ENCODE measurements at regions of chr16 and their contacts with region 1.

Region 1: DNA sequence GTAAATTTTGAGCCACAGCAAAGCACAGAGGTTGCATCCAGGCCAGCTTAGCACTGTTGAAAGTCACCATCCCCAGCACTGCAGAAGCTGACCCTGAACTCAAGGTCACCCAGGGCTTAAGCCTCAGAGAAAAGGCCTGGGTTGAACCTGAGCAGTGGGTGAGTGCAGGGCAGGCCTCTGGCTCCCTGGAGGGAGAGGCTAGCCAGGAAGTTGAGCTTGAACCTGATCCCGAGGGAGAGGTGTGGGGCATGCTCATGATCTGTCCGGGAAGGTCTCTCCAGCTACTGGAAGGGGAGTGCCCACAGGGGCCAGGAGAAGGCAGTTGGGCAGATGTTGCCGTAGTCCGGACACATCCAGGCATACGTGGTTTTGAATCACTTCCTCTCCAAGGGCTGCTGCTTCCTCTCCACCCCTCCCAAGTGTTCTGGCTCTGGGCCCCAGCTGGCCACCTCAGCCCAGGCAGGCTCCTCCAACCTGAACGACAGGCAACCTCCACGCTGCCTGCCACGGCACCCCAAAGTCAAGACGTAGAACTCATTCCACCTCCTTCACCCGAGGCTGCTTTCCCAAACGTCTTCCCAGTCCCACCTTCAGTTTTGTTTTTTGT is 18.4 kb downstream of the CARHSP1 start:
- DNase-seq: no peak

Region 2: GRCh38 chr16:8712589-8713361 is 137.6 kb before region 1 on chr16:
- in situ Hi-C with region 1: no loop called
- DNase-seq: no peak

Region 3: DNA sequence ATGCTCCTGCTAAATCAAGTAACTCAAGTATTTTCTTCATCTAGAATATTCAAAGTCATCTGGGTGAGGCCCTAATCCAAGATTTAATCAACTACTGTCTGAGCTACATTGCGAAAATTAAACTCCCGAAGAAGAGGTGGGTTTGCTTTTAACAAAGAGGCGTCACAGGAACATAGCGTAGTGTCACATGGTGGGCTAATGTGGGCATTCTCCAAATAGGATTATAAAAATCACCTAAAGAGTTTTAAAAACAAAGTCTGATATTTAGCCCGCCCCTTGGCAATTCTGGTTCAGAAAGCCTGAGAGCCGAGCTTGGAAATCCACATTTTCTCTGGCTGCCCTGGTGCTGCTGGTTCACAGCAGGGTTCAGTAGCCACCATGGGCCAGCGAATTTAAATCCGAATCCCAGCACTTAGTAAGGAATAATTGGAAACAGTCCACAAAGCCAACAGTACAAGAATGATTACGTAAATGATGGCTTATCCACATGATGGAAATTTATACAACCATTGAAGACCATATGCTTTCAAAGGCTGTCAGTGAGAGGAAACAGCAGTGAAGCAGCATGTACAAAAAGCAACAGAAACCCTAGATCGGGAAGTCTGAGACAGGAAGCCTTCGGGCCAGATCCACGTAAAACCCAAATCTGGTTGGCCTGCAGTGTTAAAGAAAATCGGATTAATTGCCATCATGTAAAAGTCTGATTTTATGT is 44.0 kb before region 1 on chr16:
- in situ Hi-C with region 1: loop called (anchors 10 kb)
- DNase-seq: no peak

Measured in Caki2 (cell line).